Breast epithelium (tissue), 4 donors: ENCODE measurements at regions of chr13 and their contacts with region 1.

Region 1: GRCh38 chr13:45464687-45465453 is at the start of gene COG3:
- DNase-seq: peak; percentile 93 to 94
- H3K4me3 ChIP-seq: peak within 1 kb of the TSS; percentile 82 to 94 (median 86)
- H3K27ac ChIP-seq: peak within 1 kb of the TSS; percentile 88 to 95
- H3K4me1 ChIP-seq: no peaks in the 10 kb centered on the region
- H3K27me3 ChIP-seq: no peaks in the 10 kb centered on the region
- CTCF ChIP-seq: peak in 2 of 3 donors; percentile 4 to 76
- POLR2A ChIP-seq: peak; percentile 85
- total RNA-seq, gene COG3: 30.4 to 45.1 (median 39.7) TPM

Region 2: DNA sequence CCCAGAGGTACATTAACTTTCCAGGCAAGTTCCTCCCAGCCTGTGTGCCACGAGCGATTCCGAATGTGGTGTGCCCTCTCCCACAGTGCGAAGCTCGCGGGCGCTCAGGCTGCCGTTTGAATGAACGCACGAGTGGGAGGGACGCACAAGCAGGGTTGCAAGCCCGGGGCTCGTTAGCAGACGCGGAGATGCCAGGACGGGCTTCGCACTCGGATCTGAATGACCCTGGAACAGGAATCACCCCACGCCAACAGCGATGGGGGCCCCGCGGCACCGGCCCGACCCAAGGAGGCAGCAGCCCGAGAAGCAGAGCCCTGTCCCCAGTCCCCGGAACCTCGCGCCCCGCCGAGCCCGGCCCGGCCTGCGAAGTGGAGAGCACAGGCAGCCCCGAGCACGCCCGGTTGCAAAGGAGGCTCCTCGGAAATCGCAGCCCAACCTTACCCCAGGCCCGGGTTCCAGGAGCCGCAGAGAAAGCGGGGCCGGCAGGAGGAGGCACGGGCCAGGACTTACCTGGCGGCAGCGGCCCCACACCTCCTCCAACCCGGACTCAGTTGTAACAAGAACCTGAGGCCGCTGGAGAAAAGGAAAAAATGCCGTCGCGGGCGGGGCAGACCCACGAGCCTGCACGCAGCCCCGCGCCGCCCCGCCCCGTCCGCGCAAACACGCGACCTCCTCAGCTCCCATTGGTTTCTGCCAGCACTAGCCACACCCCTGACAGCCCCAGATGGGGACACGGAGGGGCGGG is 46.9 kb before region 1 on chr13 and contains the start of gene SLC25A30:
- intact Hi-C with region 1: loop called (anchors 5 kb)
- DNase-seq: peak; percentile 90 to 91
- H3K4me3 ChIP-seq: peak within 1 kb of the TSS; percentile 69 to 86 (median 80)
- H3K27ac ChIP-seq: peak within 1 kb of the TSS; percentile 84 to 92
- H3K4me1 ChIP-seq: peaks cover 4 to 6% of the 10 kb centered on the region in 2 donors
- H3K27me3 ChIP-seq: no peaks in the 10 kb centered on the region
- CTCF ChIP-seq: no peak
- POLR2A ChIP-seq: no peak
- total RNA-seq, gene SLC25A30: 11.7 to 20.3 (median 14.4) TPM